Heart right ventricle (tissue), 16 donors: ENCODE measurements at regions of chr11 and their contacts with region 1.

Region 1: DNA sequence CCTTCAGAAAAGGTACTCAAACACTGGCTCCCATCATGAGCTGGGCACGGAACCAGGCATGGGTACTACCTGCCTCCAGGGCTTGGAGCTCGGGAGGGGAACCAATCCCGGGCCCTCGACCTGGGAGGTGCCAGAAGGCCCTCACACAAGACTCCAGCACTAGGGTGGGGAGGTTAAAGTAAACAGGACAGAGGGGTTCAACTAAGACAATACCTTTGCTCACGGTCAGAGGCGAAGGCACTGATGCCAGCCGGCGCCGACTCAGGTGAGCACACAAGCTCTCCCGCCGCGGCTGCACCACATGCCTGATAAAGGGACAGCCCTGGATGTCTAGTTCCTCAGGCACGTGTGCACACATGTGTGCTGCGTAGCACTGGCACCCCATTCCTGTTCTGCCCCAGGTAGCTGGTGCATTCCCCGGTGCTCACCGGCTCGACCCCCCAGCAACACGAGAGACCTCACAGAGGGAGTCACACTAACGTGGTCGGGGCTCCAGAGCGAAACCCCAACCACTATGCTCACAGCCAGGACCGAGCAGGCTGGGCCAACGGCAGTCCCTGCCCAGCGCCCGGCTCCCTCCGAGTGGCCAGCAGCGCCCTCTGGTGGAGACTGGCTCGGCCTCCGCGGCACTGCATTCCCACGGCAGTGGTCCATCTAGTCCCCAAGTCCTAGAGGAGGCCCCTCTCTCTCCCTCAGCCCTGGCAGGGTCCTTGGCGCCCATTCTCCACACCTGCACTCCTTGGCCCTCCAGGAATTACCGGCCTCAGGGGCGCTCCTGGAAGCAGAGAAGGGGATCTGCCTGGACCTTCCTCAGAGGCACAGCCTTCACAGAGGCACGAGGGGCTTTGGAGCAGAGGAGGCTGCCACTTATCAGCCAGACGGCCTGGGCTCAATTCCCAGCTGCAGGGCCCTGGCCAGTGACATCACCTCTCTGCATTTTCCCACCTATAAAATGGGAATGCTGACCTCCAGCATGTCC is 28.8 kb upstream of the MOB2 start:
- DNase-seq: peak; percentile 73 to 86
- ATAC-seq: peak; percentile 87 to 94 (median 90)
- H3K4me3 ChIP-seq: peak overlapping the region in 1 of 10 donors; percentile 9
- H3K27ac ChIP-seq: no peak overlapping the region
- H3K4me1 ChIP-seq: peaks cover 28 to 90% (median 71%) of the 10 kb centered on the region in 9 donors
- H3K27me3 ChIP-seq: no peaks in the 10 kb centered on the region
- CTCF ChIP-seq: peak; percentile 90 to 98 (median 97)

Region 2: GRCh38 chr11:1202776-1203504 is 312.4 kb before region 1 on chr11:
- intact Hi-C with region 1: loop called (anchors 2 to 5 kb)
- DNase-seq: peak; percentile 23 to 64
- ATAC-seq: peak; percentile 67 to 85 (median 74)
- H3K4me3 ChIP-seq: no peak overlapping the region
- H3K27ac ChIP-seq: no peak overlapping the region
- H3K4me1 ChIP-seq: peaks cover 0 to 7% (median 3%) of the 10 kb centered on the region in 9 donors
- H3K27me3 ChIP-seq: peaks cover 0 to 47% (median 38%) of the 10 kb centered on the region in 7 donors
- CTCF ChIP-seq: peak; percentile 86 to 95 (median 92)

Region 3: GRCh38 chr11:1262172-1263006 is 253.0 kb before region 1 on chr11:
- intact Hi-C with region 1: loop called in 2 of 10 experiments (anchors 10 kb)
- DNase-seq: peak; percentile 89 to 92
- ATAC-seq: peak; percentile 91 to 97 (median 96)
- H3K4me3 ChIP-seq: peak overlapping the region; percentile 32 to 62 (median 54)
- H3K27ac ChIP-seq: peak overlapping the region in 9 of 10 donors; percentile 73 to 85 (median 79)
- H3K4me1 ChIP-seq: peaks cover 4 to 17% (median 14%) of the 10 kb centered on the region in 9 donors
- H3K27me3 ChIP-seq: no peaks in the 10 kb centered on the region
- CTCF ChIP-seq: no peak

Region 4: GRCh38 chr11:1298695-1299492 is 216.5 kb before region 1 on chr11:
- intact Hi-C with region 1: loop called in 6 of 10 experiments (anchors 10 kb)
- DNase-seq: peak; percentile 43 to 73
- ATAC-seq: peak; percentile 69 to 92 (median 76)
- H3K4me3 ChIP-seq: no peak overlapping the region
- H3K27ac ChIP-seq: peak overlapping the region in 7 of 10 donors; percentile 7 to 55 (median 41)
- H3K4me1 ChIP-seq: peaks cover 11 to 53% (median 36%) of the 10 kb centered on the region in 9 donors
- H3K27me3 ChIP-seq: no peaks in the 10 kb centered on the region
- CTCF ChIP-seq: no peak

Region 5: DNA sequence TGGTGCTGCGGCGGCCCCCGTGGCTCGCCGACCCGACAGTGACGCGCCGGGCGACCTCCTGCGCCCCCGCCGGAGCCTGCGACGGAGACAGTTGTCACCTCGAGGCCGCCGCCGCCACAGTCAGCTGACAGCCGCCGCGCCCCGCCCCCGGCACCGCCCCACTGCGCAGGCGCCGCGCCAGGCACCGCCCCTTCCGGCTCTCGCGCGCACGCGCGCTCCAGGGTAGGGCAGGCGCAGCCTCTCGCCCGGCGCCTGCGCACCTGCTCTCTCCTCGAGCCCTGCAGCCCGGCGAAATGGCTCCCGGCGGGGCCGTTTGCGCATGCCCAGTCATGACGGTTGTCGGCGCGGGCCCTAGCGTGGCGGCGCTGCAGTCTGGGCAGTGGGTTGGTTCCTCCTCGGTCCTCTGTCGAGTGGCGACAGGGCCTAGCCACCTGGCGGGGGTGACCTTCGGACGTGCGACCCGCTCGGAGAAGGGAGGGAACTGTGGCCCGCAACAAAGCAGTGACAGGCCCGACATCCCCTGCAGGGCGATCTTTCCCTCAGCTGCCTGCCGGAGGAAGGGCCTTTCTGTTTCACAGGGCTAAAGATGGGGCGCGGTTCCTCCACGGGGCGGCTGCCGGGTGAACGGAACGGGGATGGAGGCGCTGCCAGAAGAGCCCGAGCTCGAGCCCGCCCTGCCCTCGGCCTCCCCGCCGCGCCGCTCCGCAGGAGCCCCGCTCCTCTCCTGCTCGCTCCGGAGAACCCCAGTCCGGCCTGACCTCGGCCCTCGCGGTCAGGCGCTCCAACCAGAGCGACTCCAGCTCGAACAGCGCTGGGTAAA is 205.7 kb before region 1 on chr11 and contains the start of gene TOLLIP:
- intact Hi-C with region 1: loop called in 6 of 10 experiments (anchors 10 kb)
- DNase-seq: peak; percentile 96 to 98
- ATAC-seq: peak; percentile 95 to 99 (median 98)
- H3K4me3 ChIP-seq: peak within 1 kb of the TSS; percentile 50 to 94 (median 85)
- H3K27ac ChIP-seq: peak within 1 kb of the TSS; percentile 74 to 97 (median 93)
- H3K4me1 ChIP-seq: peaks cover 5 to 55% (median 37%) of the 10 kb centered on the region in 9 donors
- H3K27me3 ChIP-seq: no peaks in the 10 kb centered on the region
- CTCF ChIP-seq: peak in 7 of 9 donors; percentile 12 to 63 (median 29)
- total RNA-seq, gene TOLLIP: 34.3 to 53.6 (median 45.2) TPM

Region 6: DNA sequence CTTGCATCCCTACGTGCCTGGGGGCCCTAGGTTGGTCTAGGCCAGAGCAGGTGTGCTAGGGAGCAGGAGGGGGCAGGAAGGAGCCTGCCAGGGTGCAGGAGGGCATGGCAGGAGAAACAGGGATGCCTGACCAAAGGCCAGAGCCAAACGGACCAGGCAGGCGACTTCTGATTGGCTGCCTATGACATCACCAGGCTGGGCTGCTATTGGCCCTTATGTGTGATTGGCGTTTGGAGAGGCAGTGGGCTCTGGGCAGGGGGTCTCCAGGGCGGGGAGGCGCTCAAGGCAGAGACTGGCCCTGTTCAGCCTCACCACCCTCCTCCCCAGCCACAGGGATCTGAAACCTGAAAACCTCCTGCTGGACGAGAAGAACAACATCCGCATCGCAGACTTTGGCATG is 73.2 kb before region 1 on chr11:
- intact Hi-C with region 1: no loop called
- DNase-seq: no peak
- ATAC-seq: no peak
- H3K4me3 ChIP-seq: no peak overlapping the region
- H3K27ac ChIP-seq: no peak overlapping the region
- H3K4me1 ChIP-seq: peaks cover 0 to 21% (median 18%) of the 10 kb centered on the region in 9 donors
- H3K27me3 ChIP-seq: peaks cover 0 to 23% (median 0%) of the 10 kb centered on the region in 7 donors
- CTCF ChIP-seq: no peak

Region 7: GRCh38 chr11:1458340-1459218 is 56.8 kb before region 1 on chr11:
- intact Hi-C with region 1: loop called in 8 of 10 experiments (anchors 5 to 10 kb)
- DNase-seq: peak; percentile 49 to 71
- ATAC-seq: peak in 7 of 8 donors; percentile 36 to 70 (median 50)
- H3K4me3 ChIP-seq: no peak overlapping the region
- H3K27ac ChIP-seq: no peak overlapping the region
- H3K4me1 ChIP-seq: peaks cover 0 to 14% (median 2%) of the 10 kb centered on the region in 9 donors
- H3K27me3 ChIP-seq: no peaks in the 10 kb centered on the region
- CTCF ChIP-seq: peak in 7 of 9 donors; percentile 18 to 45 (median 32)